ENCODE measurements at regions of chr6 and their contacts with region 1.

Region 1: GRCh38 chr6:32522302-32523047 is 7.6 kb downstream of the HLA-DRB5 start:
- DNase-seq: no peak
- ATAC-seq: no peak
- H3K4me3 ChIP-seq: no peak overlapping the region
- H3K27ac ChIP-seq: no peak overlapping the region
- H3K4me1 ChIP-seq: no peaks in the 10 kb centered on the region
- H3K27me3 ChIP-seq: no peaks in the 10 kb centered on the region
- CTCF ChIP-seq: no peak
- POLR2A ChIP-seq: no peak
- RAD21 ChIP-seq: no peak

Region 2: GRCh38 chr6:32558426-32559057 is 36.1 kb after region 1 on chr6:
- CTCF ChIA-PET with region 1: interaction called, 14 read pairs
- POLR2A ChIA-PET with region 1: interaction called, 10 read pairs
- RAD21 ChIA-PET with region 1: no interaction called
- intact Hi-C with region 1: no loop called
- DNase-seq: no peak
- ATAC-seq: no peak
- H3K4me3 ChIP-seq: no peak overlapping the region
- H3K27ac ChIP-seq: no peak overlapping the region
- H3K4me1 ChIP-seq: no peaks in the 10 kb centered on the region
- H3K27me3 ChIP-seq: no peaks in the 10 kb centered on the region
- CTCF ChIP-seq: peak in 1 of 3 experiments; percentile 7; a peak in 1 of 6 replicates
- POLR2A ChIP-seq: no peak
- RAD21 ChIP-seq: no peak

Region 3: GRCh38 chr6:32589598-32590449 is 67.3 kb after region 1 on chr6 and contains the start of gene HLA-DRB1:
- CTCF ChIA-PET with region 1: no interaction called
- POLR2A ChIA-PET with region 1: no interaction called
- RAD21 ChIA-PET with region 1: no interaction called
- intact Hi-C with region 1: loop called (anchors 1 kb)
- DNase-seq: peak; percentile 50
- ATAC-seq: peak; percentile 100
- H3K4me3 ChIP-seq: no peak within 1 kb of the TSS
- H3K27ac ChIP-seq: no peak within 1 kb of the TSS
- H3K4me1 ChIP-seq: no peaks in the 10 kb centered on the region
- H3K27me3 ChIP-seq: no peaks in the 10 kb centered on the region
- CTCF ChIP-seq: no peak
- POLR2A ChIP-seq: no peak
- RAD21 ChIP-seq: no peak
- total RNA-seq, gene HLA-DRB1: 2.7 TPM

Measured in HCT116 (cell line).